MCF 10A (cell line): ENCODE measurements at regions of chr17 and their contacts with region 1.

Region 1: GRCh38 chr17:66567234-66568170 is 265.1 kb downstream of the PRKCA start:
- DNase-seq: peak; percentile 83
- H3K4me3 Mint-ChIP-seq: no peak overlapping the region
- H3K27ac Mint-ChIP-seq: peak overlapping the region; percentile 66
- H3K4me1 Mint-ChIP-seq: peaks cover 11% of the 10 kb centered on the region
- H3K27me3 Mint-ChIP-seq: no peaks in the 10 kb centered on the region
- CTCF ChIP-seq: peak; percentile 90

Region 2: DNA sequence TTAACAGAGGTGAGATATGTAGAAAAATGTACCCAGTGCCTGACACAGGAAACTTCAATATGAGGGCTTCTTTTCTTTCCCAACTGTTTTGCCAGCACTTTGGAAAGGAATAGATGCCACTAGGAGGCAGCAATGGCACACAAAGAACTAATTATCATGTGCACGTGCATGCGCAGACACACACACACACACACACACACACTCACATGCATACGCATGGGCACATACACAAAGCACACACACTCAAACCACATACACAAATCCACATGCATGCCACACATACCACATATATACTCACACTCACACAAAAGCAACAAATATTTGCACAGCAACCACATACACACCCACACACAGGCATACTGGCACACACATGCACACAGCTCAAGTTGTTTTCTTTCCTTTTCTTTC is 366.8 kb before region 1 on chr17:
- CTCF ChIA-PET with region 1: interaction called, 6 read pairs
- POLR2A ChIA-PET with region 1: no interaction called
- intact Hi-C with region 1: loop called (anchors 1 kb)
- DNase-seq: peak; percentile 79
- H3K4me3 Mint-ChIP-seq: no peak overlapping the region
- H3K27ac Mint-ChIP-seq: no peak overlapping the region
- H3K4me1 Mint-ChIP-seq: peaks cover 6% of the 10 kb centered on the region
- H3K27me3 Mint-ChIP-seq: no peaks in the 10 kb centered on the region
- CTCF ChIP-seq: peak; percentile 64

Region 3: GRCh38 chr17:66301797-66302741 is 265.4 kb before region 1 on chr17 and contains the start of gene PRKCA:
- CTCF ChIA-PET with region 1: interaction called, 8 read pairs
- POLR2A ChIA-PET with region 1: interaction called, 4 read pairs
- intact Hi-C with region 1: loop called (anchors 1 kb)
- DNase-seq: peak; percentile 63
- H3K4me3 Mint-ChIP-seq: peak within 1 kb of the TSS; percentile 96
- H3K27ac Mint-ChIP-seq: peak within 1 kb of the TSS; percentile 97
- H3K4me1 Mint-ChIP-seq: peaks cover 35% of the 10 kb centered on the region
- H3K27me3 Mint-ChIP-seq: no peaks in the 10 kb centered on the region
- CTCF ChIP-seq: no peak
- total RNA-seq, gene PRKCA: 20.7 and 22.8 TPM in 2 replicates

Region 4: DNA sequence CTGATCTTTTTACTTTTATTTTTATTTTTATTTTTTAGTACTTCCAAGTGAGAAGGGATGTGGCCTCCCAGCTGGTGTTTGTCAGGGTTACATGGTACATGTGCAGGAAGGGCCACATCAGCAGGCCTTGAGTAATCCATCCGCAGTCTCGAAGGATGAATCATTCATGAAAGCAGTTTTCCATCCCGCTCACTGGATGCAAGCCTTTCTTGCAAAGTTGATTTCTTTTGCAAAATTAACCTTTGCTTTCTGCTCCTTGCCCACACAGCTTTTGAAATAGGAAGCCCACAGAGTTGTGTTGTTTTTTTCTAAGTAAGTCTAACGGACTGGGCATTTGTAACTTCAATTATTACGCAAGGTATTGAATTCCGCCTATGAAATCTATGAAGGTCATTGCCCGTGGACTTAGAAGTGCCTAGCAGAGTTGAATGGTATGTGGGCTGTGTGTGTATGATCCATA is 107.7 kb before region 1 on chr17:
- CTCF ChIA-PET with region 1: no interaction called
- POLR2A ChIA-PET with region 1: no interaction called
- intact Hi-C with region 1: loop called (anchors 1 kb)
- DNase-seq: peak; percentile 92
- H3K4me3 Mint-ChIP-seq: peak overlapping the region; percentile 48
- H3K27ac Mint-ChIP-seq: no peak overlapping the region
- H3K4me1 Mint-ChIP-seq: peaks cover 23% of the 10 kb centered on the region
- H3K27me3 Mint-ChIP-seq: no peaks in the 10 kb centered on the region
- CTCF ChIP-seq: no peak

Region 5: DNA sequence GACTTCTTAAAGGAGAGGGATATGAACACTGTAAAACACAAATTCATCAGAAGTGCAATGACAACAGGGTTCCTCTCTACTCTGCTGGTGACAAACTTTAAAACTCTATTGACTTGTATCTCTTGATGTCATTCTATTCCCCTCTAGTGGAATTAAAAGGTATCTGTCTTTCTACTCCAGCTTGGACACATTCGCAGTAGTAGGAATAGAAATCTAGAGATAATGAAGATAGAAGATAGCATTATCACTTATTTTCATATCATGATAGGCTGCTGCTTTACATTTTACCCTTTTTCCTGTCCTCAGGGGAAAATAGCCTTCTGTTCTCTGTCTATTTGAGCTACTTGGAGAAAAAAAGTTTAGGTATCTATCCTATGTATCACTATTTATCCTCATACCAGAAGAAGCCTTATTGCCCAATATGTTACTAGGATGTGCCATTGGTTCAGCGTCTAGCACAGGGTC is 57.8 kb after region 1 on chr17:
- CTCF ChIA-PET with region 1: no interaction called
- POLR2A ChIA-PET with region 1: no interaction called
- intact Hi-C with region 1: loop called (anchors 1 kb)
- DNase-seq: peak; percentile 33
- H3K4me3 Mint-ChIP-seq: no peak overlapping the region
- H3K27ac Mint-ChIP-seq: no peak overlapping the region
- H3K4me1 Mint-ChIP-seq: no peaks in the 10 kb centered on the region
- H3K27me3 Mint-ChIP-seq: no peaks in the 10 kb centered on the region
- CTCF ChIP-seq: peak; percentile 51